Activated CD4-positive, alpha-beta T cell treated with anti-CD3 and anti-CD28 coated beads, Interleukin-2, amount 10 ng/mL, durations not matched to agents 24 days and 14 days (primary cell): ENCODE measurements at regions of chr10 and their contacts with region 1.

Region 1: GRCh38 chr10:124614003-124614659 is 130.0 kb downstream of the FAM53B start:
- DNase-seq: peak; percentile 79
- H3K4me3 Mint-ChIP-seq: no peak overlapping the region
- H3K27ac Mint-ChIP-seq: peak overlapping the region; percentile 25
- H3K4me1 Mint-ChIP-seq: peaks cover 32% of the 10 kb centered on the region
- H3K27me3 Mint-ChIP-seq: peaks cover 1% of the 10 kb centered on the region

Region 2: DNA sequence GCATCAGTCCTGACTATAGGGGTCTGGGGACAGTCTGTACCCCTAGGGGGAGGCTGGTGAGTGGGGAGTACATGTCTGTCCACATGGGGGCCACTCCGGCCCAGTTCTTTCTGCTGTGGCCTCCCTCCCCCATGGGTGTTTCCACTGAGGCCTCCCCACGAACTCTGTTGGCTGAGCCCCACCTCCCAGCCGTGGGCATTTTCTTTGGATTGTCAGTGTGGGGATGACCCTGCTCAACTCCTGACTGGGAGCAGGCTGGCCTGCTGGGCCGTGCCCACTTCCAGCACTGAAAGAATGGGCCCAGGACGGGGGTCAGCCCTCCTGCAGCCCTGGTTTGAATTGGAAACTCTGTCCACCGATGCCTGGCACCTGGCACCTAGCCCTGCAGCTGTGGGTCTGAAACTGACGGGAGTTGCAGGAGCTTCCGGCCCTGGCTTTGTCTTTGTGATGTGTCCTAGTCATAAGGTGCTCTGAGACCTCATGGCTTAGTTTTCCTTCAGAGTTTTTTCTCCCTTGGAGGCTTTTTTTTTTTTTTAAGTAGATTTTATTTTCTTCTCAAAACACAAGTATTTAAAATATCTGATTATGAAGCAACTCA is 106.0 kb before region 1 on chr10:
- intact Hi-C with region 1: no loop called
- DNase-seq: no peak
- H3K4me3 Mint-ChIP-seq: no peak overlapping the region
- H3K27ac Mint-ChIP-seq: no peak overlapping the region
- H3K4me1 Mint-ChIP-seq: peaks cover 5% of the 10 kb centered on the region
- H3K27me3 Mint-ChIP-seq: no peaks in the 10 kb centered on the region

Region 3: DNA sequence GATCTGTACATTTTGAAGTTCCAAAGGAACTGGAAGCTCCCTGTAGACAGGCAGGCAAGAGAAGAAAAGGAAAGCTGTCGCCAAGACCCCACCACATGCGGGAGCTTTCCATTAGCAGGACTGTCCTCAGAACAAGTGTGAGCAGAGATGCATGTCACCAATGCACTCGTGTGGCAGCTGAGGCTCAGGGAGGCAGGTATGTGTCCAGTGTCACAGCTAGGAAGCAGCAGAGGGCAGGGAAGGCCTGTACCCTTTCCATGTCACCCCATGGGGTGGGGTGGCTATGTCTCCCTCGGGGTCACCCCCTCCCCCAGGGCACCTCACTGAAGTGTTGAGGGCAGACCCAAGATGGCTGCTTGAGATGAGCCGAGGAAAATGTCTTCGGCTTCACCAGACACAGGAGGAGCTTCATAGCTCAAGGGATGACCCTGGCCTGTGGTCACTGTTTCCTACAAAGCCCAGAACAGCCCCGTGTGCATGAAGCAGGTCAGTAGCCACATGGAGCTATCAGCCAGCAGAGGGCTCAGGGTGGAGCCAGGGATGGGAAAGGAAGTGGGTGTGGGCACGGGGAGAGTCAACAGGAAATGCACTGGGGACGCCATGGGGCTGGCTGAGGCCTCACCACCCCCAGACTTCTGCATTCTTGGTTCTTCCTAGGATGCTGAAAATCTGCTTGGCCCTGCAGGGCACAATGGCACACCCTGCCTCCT is 33.4 kb after region 1 on chr10:
- intact Hi-C with region 1: loop called (anchors 2 kb)
- DNase-seq: peak; percentile 92
- H3K4me3 Mint-ChIP-seq: peak overlapping the region; percentile 81
- H3K27ac Mint-ChIP-seq: peak overlapping the region; percentile 94
- H3K4me1 Mint-ChIP-seq: peaks cover 64% of the 10 kb centered on the region
- H3K27me3 Mint-ChIP-seq: no peaks in the 10 kb centered on the region

Region 4: DNA sequence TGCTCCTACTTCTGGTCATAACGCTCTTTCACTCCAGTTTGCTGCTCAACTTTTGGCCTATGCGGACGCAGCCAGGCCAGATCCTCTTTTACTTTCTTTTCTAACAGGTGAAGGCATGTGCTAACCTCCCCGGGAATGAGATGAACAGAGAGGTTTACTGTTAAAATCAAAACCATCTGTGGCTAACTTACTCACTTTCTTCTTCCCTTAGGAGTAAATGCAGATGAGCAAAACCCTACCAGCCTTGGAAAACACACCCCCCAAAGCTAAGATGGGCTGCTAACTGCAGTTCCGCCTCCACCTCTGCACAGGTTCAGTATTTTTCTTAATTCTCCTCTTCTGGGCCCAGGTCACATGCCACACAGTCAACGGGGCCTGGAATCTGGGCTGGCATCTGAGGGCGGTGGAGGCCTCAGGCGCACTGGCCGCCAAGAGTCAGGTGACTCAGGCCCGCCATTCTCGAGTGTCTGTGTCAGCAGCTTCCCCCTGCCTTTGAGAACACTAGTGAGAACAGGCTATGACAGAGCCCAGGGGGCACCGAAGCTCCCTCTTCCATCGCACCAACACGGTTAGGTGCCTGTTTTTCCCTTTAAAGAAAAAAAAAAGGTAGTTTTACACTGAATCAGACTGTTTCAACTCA is 118.9 kb after region 1 on chr10:
- intact Hi-C with region 1: loop called (anchors 2 kb)
- DNase-seq: peak; percentile 80
- H3K4me3 Mint-ChIP-seq: peak overlapping the region; percentile 51
- H3K27ac Mint-ChIP-seq: peak overlapping the region; percentile 63
- H3K4me1 Mint-ChIP-seq: peaks cover 67% of the 10 kb centered on the region
- H3K27me3 Mint-ChIP-seq: no peaks in the 10 kb centered on the region